A549 (cell line): ENCODE measurements at regions of chr10 and their contacts with region 1.

Region 1: GRCh38 chr10:70540089-70540788 is 61.7 kb downstream of the PALD1 start:
- DNase-seq: peak; percentile 27 to 58
- ATAC-seq: peak; percentile 55 to 85; a peak in 5 of 6 replicates
- H3K4me3 ChIP-seq: no peak overlapping the region
- H3K27ac ChIP-seq: no peak overlapping the region
- H3K4me1 ChIP-seq: no peaks in the 10 kb centered on the region
- CTCF ChIP-seq: peak; percentile 60; the same call in 2 of the 3 replicates
- EP300 ChIP-seq: no peak
- POLR2A ChIP-seq: no peak
- RAD21 ChIP-seq: peak; percentile 68 to 74

Region 2: DNA sequence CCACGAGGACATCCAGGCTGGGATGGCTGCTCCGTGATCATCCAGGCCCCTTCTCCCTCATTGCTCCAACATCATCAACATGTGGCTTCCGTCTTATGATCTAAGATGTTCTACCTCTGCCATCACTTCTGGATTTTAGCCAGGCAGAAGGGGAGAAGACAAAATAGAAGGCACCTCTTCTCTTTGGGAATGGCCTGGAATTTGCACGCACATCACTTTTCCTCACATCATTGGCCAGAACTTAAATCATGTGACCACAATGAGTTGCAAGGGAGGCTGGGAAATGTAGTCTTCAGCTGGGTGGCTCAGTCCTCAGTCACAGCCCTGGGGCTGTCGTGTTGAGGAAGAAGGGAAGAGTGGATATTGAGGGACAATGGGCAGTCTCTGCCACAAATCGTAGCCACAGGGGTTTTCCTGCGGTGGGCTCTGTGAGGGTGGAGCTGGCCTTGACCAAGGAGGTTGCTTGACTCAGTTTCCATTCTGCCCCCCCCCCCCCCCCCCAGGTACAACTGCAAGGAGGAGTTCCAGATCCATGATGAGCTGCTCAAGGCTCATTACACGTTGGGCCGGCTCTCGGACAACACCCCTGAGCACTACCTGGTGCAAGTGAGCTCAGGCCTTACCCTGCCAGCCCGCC is 11.4 kb before region 1 on chr10:
- CTCF ChIA-PET with region 1: interaction called, 12 read pairs
- POLR2A ChIA-PET with region 1: no interaction called
- DNase-seq: peak; percentile 66 to 67
- ATAC-seq: peak; percentile 75 to 95; a peak in 5 of 6 replicates
- H3K4me3 ChIP-seq: no peak overlapping the region
- H3K27ac ChIP-seq: no peak overlapping the region
- H3K4me1 ChIP-seq: no peaks in the 10 kb centered on the region
- CTCF ChIP-seq: no peak
- EP300 ChIP-seq: no peak
- POLR2A ChIP-seq: no peak
- RAD21 ChIP-seq: no peak

Region 3: GRCh38 chr10:70564901-70565351 is 24.7 kb after region 1 on chr10:
- CTCF ChIA-PET with region 1: no interaction called
- POLR2A ChIA-PET with region 1: no interaction called
- DNase-seq: no peak
- ATAC-seq: peak; percentile 31 to 51; a peak in 3 of 6 replicates
- H3K4me3 ChIP-seq: no peak overlapping the region
- H3K27ac ChIP-seq: no peak overlapping the region
- H3K4me1 ChIP-seq: no peaks in the 10 kb centered on the region
- CTCF ChIP-seq: no peak
- EP300 ChIP-seq: no peak
- POLR2A ChIP-seq: no peak
- RAD21 ChIP-seq: 0 out of 5 replicates have a peak, but pooled peaks of 1 of the 2 experiments have one; percentile 21